Activated CD4-positive, alpha-beta memory T cell treated with anti-CD3 and anti-CD28 coated beads, Interleukin-2, amount 10 ng/mL, durations not matched to agents 7 days and 5 days (primary cell): ENCODE measurements at regions of chr1 and their contacts with region 1.

Region 1: GRCh38 chr1:181142096-181142958 is 53.8 kb downstream of the IER5 start:
- DNase-seq: peak; percentile 91
- H3K4me3 Mint-ChIP-seq: peak overlapping the region; percentile 51
- H3K27ac Mint-ChIP-seq: peak overlapping the region; percentile 69
- H3K4me1 Mint-ChIP-seq: peaks cover 59% of the 10 kb centered on the region
- H3K27me3 Mint-ChIP-seq: peaks cover 18% of the 10 kb centered on the region

Region 2: GRCh38 chr1:181021811-181022434 is 120.4 kb before region 1 on chr1:
- CTCF ChIA-PET with region 1: interaction called, 30 read pairs
- POLR2A ChIA-PET with region 1: interaction called, 20 read pairs
- DNase-seq: peak; percentile 62
- H3K4me3 Mint-ChIP-seq: peak overlapping the region; percentile 95
- H3K27ac Mint-ChIP-seq: peak overlapping the region; percentile 89
- H3K4me1 Mint-ChIP-seq: peaks cover 48% of the 10 kb centered on the region
- H3K27me3 Mint-ChIP-seq: peaks cover 18% of the 10 kb centered on the region

Region 3: GRCh38 chr1:181044449-181044966 is 97.8 kb before region 1 on chr1:
- CTCF ChIA-PET with region 1: interaction called, 149 read pairs
- POLR2A ChIA-PET with region 1: interaction called, 39 read pairs
- DNase-seq: peak; percentile 57
- H3K4me3 Mint-ChIP-seq: no peak overlapping the region
- H3K27ac Mint-ChIP-seq: peak overlapping the region; percentile 80
- H3K4me1 Mint-ChIP-seq: peaks cover 46% of the 10 kb centered on the region
- H3K27me3 Mint-ChIP-seq: no peaks in the 10 kb centered on the region

Region 4: DNA sequence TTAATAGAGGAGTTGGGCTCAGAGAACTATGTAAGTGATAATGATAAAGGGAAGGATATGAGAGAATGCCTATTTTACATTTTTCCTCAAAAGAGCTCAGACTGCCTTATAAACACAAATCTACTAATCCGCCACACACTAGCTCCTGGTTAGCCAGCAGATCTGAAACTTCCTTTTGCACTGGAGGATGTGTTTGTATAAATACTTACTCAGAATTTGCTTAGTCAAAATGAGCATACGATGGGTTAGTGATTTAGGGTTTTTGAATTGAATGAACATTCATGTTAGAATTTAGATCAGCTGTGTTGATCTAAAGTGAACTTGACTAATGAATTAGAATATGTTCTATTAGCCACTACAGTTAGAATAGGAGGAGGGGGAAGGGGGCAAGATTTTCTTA is 62.9 kb before region 1 on chr1:
- CTCF ChIA-PET with region 1: interaction called, 51 read pairs
- POLR2A ChIA-PET with region 1: interaction called, 322 read pairs
- DNase-seq: no peak
- H3K4me3 Mint-ChIP-seq: no peak overlapping the region
- H3K27ac Mint-ChIP-seq: peak overlapping the region; percentile 8
- H3K4me1 Mint-ChIP-seq: peaks cover 38% of the 10 kb centered on the region
- H3K27me3 Mint-ChIP-seq: peaks cover 17% of the 10 kb centered on the region

Region 5: GRCh38 chr1:181099152-181100014 is 42.9 kb before region 1 on chr1:
- CTCF ChIA-PET with region 1: interaction called, 60 read pairs
- POLR2A ChIA-PET with region 1: interaction called, 50 read pairs
- DNase-seq: peak; percentile 55
- H3K4me3 Mint-ChIP-seq: peak overlapping the region; percentile 54
- H3K27ac Mint-ChIP-seq: peak overlapping the region; percentile 90
- H3K4me1 Mint-ChIP-seq: peaks cover 90% of the 10 kb centered on the region
- H3K27me3 Mint-ChIP-seq: no peaks in the 10 kb centered on the region

Region 6: GRCh38 chr1:181128592-181129497 is 13.5 kb before region 1 on chr1:
- CTCF ChIA-PET with region 1: interaction called, 15 read pairs
- POLR2A ChIA-PET with region 1: interaction called, 20 read pairs
- DNase-seq: no peak
- H3K4me3 Mint-ChIP-seq: no peak overlapping the region
- H3K27ac Mint-ChIP-seq: no peak overlapping the region
- H3K4me1 Mint-ChIP-seq: peaks cover 48% of the 10 kb centered on the region
- H3K27me3 Mint-ChIP-seq: no peaks in the 10 kb centered on the region

Region 7: DNA sequence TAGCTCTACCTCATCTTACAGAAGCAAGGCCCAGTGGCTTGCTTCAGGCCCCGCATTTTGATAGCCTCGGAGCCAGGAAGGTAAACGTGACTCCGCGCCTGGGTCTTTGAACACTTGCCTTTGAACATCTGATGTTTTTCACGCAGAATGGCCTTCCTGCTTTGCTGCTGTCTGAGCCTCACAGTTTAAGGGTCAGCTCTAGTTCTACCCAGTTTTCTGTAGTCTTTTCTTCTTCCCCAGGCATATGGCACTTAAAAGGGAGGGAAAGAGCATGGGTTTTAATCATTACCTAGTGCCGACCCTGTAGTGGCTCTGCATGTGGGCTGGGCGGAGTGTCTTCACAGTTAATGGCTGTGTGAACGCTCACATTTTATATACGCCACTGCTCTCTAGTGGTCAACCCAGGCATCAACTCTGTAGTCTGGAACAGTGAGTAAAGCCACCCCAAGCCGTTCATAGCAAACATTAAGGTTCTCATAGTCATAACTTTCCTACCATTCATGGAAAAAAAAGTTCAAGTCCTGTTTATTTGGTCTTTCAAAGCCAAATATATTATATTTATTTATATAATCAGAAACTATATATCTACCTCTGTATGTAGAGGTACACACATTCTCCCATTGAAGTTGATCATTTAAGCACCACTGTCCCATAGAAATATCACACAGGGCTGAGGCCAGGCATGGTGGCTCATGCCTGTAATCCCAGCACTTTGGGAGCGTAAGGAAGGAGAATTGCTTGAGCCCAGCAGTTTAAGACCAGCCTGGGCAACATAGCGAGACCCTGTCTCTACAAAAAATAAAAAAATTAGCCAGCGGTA is 24.3 kb after region 1 on chr1:
- CTCF ChIA-PET with region 1: interaction called, 76 read pairs
- POLR2A ChIA-PET with region 1: interaction called, 8 read pairs
- DNase-seq: peak; percentile 76
- H3K4me3 Mint-ChIP-seq: no peak overlapping the region
- H3K27ac Mint-ChIP-seq: no peak overlapping the region
- H3K4me1 Mint-ChIP-seq: peaks cover 5% of the 10 kb centered on the region
- H3K27me3 Mint-ChIP-seq: peaks cover 17% of the 10 kb centered on the region